Mucosa of descending colon (tissue), 3 donors: ENCODE measurements at regions of chr4 and their contacts with region 1.

Region 1: DNA sequence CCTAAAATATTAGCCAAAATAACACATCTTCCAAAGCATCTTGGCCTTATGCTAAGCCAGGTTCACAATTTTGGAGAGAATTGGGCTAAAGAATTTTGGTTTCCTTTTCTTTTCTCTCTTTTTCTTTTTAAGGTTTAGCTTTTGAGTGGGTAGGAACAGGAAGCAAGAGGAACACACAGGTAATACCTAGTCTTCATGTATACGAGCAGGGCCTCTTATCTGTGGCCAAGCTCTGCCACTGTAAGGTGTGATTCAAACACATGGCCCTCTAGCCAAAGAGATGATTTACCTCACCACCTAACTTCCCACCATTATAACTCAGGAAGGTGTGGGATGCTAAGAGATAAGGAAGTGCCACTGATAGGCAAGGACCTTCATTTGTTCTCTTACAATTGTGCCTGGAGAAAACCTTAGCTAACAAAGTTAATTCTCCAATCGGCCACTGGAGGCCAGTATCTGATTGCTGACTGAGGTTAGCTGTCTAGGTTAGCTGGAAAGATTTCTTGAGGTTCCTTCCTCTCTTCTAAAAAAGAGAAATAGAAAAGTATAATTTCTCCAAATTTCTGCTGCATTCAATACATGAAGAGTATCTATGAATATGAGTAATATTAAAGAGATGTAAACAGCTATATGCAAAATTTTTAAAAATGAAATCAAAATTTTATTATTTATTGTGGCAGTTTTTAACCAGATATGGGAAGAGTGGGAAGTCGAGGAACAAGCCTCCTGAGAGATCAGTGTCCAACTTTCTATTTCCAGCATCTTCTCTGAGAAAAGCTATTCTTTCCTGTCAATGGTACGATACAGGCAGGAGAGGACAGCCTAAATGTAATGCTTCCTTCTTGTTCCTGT is 30.1 kb upstream of the BBS7 start:
- DNase-seq: peak in 1 of 3 donors; percentile 70
- ATAC-seq: peak; percentile 69
- H3K4me3 ChIP-seq: no peak overlapping the region
- H3K4me1 ChIP-seq: no peaks in the 10 kb centered on the region
- CTCF ChIP-seq: peak; percentile 27

Region 2: GRCh38 chr4:121800961-121801714 is 99.2 kb before region 1 on chr4 and contains the start of gene EXOSC9:
- intact Hi-C with region 1: no loop called
- DNase-seq: peak; percentile 94 to 97 (median 96)
- ATAC-seq: peak; percentile 99
- H3K4me3 ChIP-seq: peak within 1 kb of the TSS; percentile 74
- H3K4me1 ChIP-seq: no peaks in the 10 kb centered on the region
- CTCF ChIP-seq: no peak
- total RNA-seq, gene EXOSC9: 12.5 to 16.0 (median 12.6) TPM

Region 3: GRCh38 chr4:121973816-121974215 is 73.5 kb after region 1 on chr4:
- intact Hi-C with region 1: no loop called
- DNase-seq: no peak
- ATAC-seq: no peak
- H3K4me3 ChIP-seq: no peak overlapping the region
- H3K4me1 ChIP-seq: no peaks in the 10 kb centered on the region
- CTCF ChIP-seq: no peak

Region 4: DNA sequence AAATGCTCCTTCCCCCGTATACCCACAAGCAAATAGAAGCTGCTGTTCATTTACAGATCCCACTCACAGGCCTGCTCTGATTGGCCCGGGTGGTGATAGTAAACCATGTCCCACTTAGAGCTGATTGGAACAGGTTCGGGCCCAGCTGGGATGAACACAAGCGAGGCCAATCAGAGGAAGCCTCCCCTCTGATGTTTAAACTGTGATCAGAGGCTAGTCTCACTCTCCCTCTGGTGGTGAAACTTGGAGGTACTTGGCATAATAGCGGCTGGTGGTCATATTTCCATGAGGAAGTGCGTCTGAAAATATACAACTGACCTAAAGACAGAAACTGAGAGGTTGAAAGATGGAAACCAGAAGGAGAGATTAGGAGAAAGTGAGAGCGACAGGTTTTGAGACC is 103.0 kb after region 1 on chr4:
- intact Hi-C with region 1: loop called in 1 of 2 experiments (anchors 5 kb)
- DNase-seq: peak in 2 of 3 donors; percentile 21 to 86
- ATAC-seq: peak; percentile 79
- H3K4me3 ChIP-seq: no peak overlapping the region
- H3K4me1 ChIP-seq: no peaks in the 10 kb centered on the region
- CTCF ChIP-seq: peak; percentile 17